Activated naive CD4-positive, alpha-beta T cell treated with anti-CD3 and anti-CD28 coated beads for 36 hours (primary cell): ENCODE measurements at regions of chr9 and their contacts with region 1.

Region 1: GRCh38 chr9:71819115-71819739 is 50.9 kb upstream of the CEMIP2 start:
- DNase-seq: peak; percentile 68
- H3K4me3 Mint-ChIP-seq: no peak overlapping the region
- H3K27ac Mint-ChIP-seq: no peak overlapping the region
- H3K4me1 Mint-ChIP-seq: peaks cover 16% of the 10 kb centered on the region
- H3K27me3 Mint-ChIP-seq: no peaks in the 10 kb centered on the region

Region 2: GRCh38 chr9:71683598-71684235 is 135.5 kb before region 1 on chr9:
- CTCF ChIA-PET with region 1: no interaction called
- intact Hi-C with region 1: no loop called
- DNase-seq: no peak
- H3K4me3 Mint-ChIP-seq: no peak overlapping the region
- H3K27ac Mint-ChIP-seq: no peak overlapping the region
- H3K4me1 Mint-ChIP-seq: peaks cover 27% of the 10 kb centered on the region
- H3K27me3 Mint-ChIP-seq: no peaks in the 10 kb centered on the region

Region 3: GRCh38 chr9:71795097-71795813 is 24.0 kb before region 1 on chr9:
- CTCF ChIA-PET with region 1: interaction called, 10 read pairs
- intact Hi-C with region 1: no loop called
- DNase-seq: no peak
- H3K4me3 Mint-ChIP-seq: no peak overlapping the region
- H3K27ac Mint-ChIP-seq: peak overlapping the region; percentile 72
- H3K4me1 Mint-ChIP-seq: peaks cover 61% of the 10 kb centered on the region
- H3K27me3 Mint-ChIP-seq: no peaks in the 10 kb centered on the region

Region 4: GRCh38 chr9:71858812-71859211 is 39.6 kb after region 1 on chr9:
- CTCF ChIA-PET with region 1: no interaction called
- intact Hi-C with region 1: no loop called
- DNase-seq: no peak
- H3K4me3 Mint-ChIP-seq: no peak overlapping the region
- H3K27ac Mint-ChIP-seq: peak overlapping the region; percentile 47
- H3K4me1 Mint-ChIP-seq: peaks cover 18% of the 10 kb centered on the region
- H3K27me3 Mint-ChIP-seq: no peaks in the 10 kb centered on the region